Transverse colon (tissue), 4 donors: ENCODE measurements at regions of chr1 and their contacts with region 1.

Region 1: DNA sequence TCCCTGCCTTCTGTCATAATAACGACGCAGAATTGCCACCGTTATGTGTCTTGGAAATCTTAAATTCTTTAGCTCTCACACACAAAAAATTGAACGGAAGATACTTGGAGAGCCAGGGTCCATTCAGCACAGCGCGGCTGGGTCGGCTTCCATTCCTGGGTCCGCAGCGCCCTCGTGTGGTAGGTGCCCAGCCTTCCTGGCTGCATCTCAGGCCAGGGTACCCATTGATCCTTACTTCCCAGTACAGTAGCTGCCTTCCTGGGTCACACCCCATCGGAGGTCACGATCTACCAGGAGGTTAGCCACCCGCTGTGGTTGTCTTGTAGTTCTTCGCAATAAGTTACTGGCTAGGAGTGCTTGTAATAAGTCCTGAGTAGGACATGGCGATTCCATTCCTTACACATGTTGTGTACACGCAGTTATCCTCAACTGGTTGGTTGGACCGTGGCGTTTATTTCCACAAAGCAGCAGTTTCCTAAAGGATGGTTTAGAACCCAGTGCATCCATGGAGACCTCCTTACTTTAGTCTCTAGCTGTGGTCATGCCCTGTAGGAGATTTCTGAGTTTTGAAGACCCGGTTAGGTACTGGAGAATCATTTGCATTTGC is 9.9 kb upstream of the MTARC1 start:
- DNase-seq: peak; percentile 87
- H3K4me3 ChIP-seq: no peak overlapping the region
- H3K27ac ChIP-seq: no peak overlapping the region
- H3K4me1 ChIP-seq: no peaks in the 10 kb centered on the region
- H3K27me3 ChIP-seq: no peaks in the 10 kb centered on the region
- CTCF ChIP-seq: peak; percentile 77 to 88 (median 86)
- EP300 ChIP-seq: no peak
- POLR2A ChIP-seq: no peak

Region 2: GRCh38 chr1:220281159-220281574 is 495.7 kb before region 1 on chr1:
- in situ Hi-C with region 1: loop called in 2 of 4 experiments (anchors 25 kb)
- intact Hi-C with region 1: no loop called
- DNase-seq: no peak
- H3K4me3 ChIP-seq: no peak overlapping the region
- H3K27ac ChIP-seq: no peak overlapping the region
- H3K4me1 ChIP-seq: no peaks in the 10 kb centered on the region
- H3K27me3 ChIP-seq: peaks cover 16% of the 10 kb centered on the region
- CTCF ChIP-seq: peak in 4 of 5 experiments; percentile 11 to 19 (median 14)
- EP300 ChIP-seq: no peak
- POLR2A ChIP-seq: no peak

Region 3: GRCh38 chr1:220680085-220680687 is 96.6 kb before region 1 on chr1:
- in situ Hi-C with region 1: loop called in 2 of 4 experiments (anchors 10 to 25 kb)
- intact Hi-C with region 1: no loop called
- DNase-seq: no peak
- H3K4me3 ChIP-seq: no peak overlapping the region
- H3K27ac ChIP-seq: no peak overlapping the region
- H3K4me1 ChIP-seq: peaks cover 0 to 4% (median 0%) of the 10 kb centered on the region in 4 donors
- H3K27me3 ChIP-seq: no peaks in the 10 kb centered on the region
- CTCF ChIP-seq: peak; percentile 65 to 73 (median 71)
- EP300 ChIP-seq: no peak
- POLR2A ChIP-seq: no peak

Region 4: DNA sequence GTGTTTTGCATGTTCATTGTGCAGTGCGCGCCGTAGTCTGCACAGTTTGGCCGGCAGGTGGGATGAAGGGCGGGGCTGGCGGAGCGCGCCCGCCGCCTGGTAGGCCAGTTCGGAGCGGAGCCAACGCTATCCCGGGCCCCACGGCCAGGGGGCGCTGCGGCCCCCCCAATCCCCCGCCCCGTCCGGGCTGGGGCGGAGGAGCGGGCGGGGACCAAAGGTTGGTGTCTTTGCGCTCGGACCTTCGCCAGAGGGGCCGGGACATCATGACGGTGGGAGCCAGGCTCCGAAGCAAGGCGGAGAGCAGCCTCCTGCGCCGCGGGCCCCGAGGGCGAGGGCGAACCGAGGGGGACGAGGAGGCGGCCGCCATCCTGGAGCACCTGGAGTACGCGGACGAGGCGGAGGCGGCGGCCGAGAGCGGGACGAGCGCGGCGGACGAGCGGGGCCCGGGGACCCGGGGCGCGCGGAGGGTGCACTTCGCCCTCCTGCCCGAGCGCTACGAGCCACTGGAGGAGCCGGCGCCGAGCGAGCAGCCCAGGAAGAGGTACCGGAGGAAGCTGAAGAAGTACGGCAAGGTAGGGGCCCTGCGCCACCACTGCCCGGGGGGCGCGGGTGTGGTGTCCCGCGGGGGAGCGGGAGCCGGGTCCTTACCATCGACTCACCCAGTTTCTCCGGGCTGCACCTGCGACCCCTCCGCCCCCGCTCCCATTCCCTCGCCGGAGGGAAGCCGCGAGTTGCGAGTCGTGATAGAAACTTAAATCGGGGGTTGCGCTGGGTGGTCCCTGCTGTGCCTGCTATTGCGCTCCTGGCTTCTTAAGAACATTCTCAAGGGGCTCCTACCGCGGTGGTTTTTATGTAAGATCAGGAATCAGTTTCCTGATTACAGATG is 86.4 kb before region 1 on chr1 and contains the start of gene C1orf115:
- in situ Hi-C with region 1: loop called in 2 of 4 experiments (anchors 10 to 25 kb)
- intact Hi-C with region 1: loop called (anchors 5 kb)
- DNase-seq: peak; percentile 88
- H3K4me3 ChIP-seq: peak within 1 kb of the TSS; percentile 45 to 85 (median 66)
- H3K27ac ChIP-seq: peak within 1 kb of the TSS; percentile 57 to 84 (median 80)
- H3K4me1 ChIP-seq: peaks cover 0 to 15% (median 9%) of the 10 kb centered on the region in 4 donors
- H3K27me3 ChIP-seq: no peaks in the 10 kb centered on the region
- CTCF ChIP-seq: peak; percentile 95 to 99 (median 98)
- EP300 ChIP-seq: no peak
- POLR2A ChIP-seq: peak; percentile 83
- total RNA-seq, gene C1orf115: 43.2 to 153 (median 103) TPM

Region 5: GRCh38 chr1:220825819-220826551 is 49.2 kb after region 1 on chr1:
- in situ Hi-C with region 1: no loop called
- intact Hi-C with region 1: no loop called
- DNase-seq: no peak
- H3K4me3 ChIP-seq: no peak overlapping the region
- H3K27ac ChIP-seq: no peak overlapping the region
- H3K4me1 ChIP-seq: peaks cover 0 to 25% (median 8%) of the 10 kb centered on the region in 4 donors
- H3K27me3 ChIP-seq: no peaks in the 10 kb centered on the region
- CTCF ChIP-seq: no peak
- EP300 ChIP-seq: no peak
- POLR2A ChIP-seq: no peak

Region 6: GRCh38 chr1:221011145-221011544 is 234.3 kb after region 1 on chr1:
- in situ Hi-C with region 1: no loop called
- intact Hi-C with region 1: no loop called
- DNase-seq: no peak
- H3K4me3 ChIP-seq: no peak overlapping the region
- H3K27ac ChIP-seq: no peak overlapping the region
- H3K4me1 ChIP-seq: no peaks in the 10 kb centered on the region
- H3K27me3 ChIP-seq: no peaks in the 10 kb centered on the region
- CTCF ChIP-seq: no peak
- EP300 ChIP-seq: no peak
- POLR2A ChIP-seq: no peak